PC-3 (cell line): ENCODE measurements at regions of chr12 and their contacts with region 1.

Region 1: GRCh38 chr12:110431957-110432587 is 18.1 kb downstream of the ARPC3 start:
- DNase-seq: no peak
- ATAC-seq: no peak
- H3K4me3 ChIP-seq: peak overlapping the region; percentile 78
- H3K27ac ChIP-seq: no peak overlapping the region
- H3K4me1 ChIP-seq: peaks cover 5% of the 10 kb centered on the region; the same call in 1 of the 2 replicates
- H3K27me3 ChIP-seq: no peaks in the 10 kb centered on the region
- CTCF ChIP-seq: no peak

Region 2: GRCh38 chr12:110024051-110024450 is 408.0 kb before region 1 on chr12:
- CTCF ChIA-PET with region 1: interaction called, 10 read pairs
- POLR2A ChIA-PET with region 1: no interaction called
- intact Hi-C with region 1: no loop called
- DNase-seq: no peak
- ATAC-seq: no peak
- H3K4me3 ChIP-seq: no peak overlapping the region
- H3K27ac ChIP-seq: no peak overlapping the region
- H3K4me1 ChIP-seq: peaks cover 21% of the 10 kb centered on the region
- H3K27me3 ChIP-seq: no peaks in the 10 kb centered on the region
- CTCF ChIP-seq: no peak

Region 3: DNA sequence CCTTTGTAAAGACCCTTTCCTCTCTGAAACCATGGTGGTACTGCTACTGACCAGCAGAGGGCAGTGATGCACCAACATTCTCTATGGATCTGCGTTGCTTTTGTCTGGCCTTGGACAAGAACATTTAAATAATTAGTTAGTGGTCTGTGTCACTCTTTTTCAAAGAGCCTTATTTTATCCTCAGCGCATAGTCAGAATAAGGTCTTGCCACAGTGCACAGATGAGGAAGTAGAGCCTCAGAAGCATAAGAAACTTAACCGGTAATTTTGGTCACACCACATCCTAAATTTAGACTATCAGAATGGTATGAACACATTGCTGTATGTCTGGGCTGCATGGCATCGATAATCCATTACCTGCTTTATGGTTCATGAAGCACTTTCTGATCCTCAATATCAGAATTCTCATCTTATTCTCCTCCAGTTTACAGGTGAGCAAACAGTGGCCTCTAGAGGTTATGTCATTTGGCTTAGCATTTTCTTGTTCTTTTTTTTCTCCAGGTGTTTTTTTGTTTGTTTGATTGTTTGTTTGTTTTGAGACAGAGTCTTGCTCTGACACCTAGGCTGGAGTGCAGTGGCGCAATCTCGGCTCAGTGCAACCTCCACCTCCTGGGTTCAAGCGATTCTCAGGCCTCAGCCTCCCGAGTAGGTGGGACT is 331.6 kb before region 1 on chr12:
- CTCF ChIA-PET with region 1: interaction called, 16 read pairs
- POLR2A ChIA-PET with region 1: interaction called, 4 read pairs
- intact Hi-C with region 1: loop called (anchors 1 kb)
- DNase-seq: peak; percentile 85
- ATAC-seq: peak; percentile 71
- H3K4me3 ChIP-seq: no peak overlapping the region
- H3K27ac ChIP-seq: no peak overlapping the region
- H3K4me1 ChIP-seq: peaks cover 4% of the 10 kb centered on the region; the same call in 1 of the 2 replicates
- H3K27me3 ChIP-seq: no peaks in the 10 kb centered on the region
- CTCF ChIP-seq: peak; percentile 99

Region 4: GRCh38 chr12:110124184-110124995 is 307.7 kb before region 1 on chr12 and contains the start of gene IFT81:
- CTCF ChIA-PET with region 1: interaction called, 15 read pairs
- POLR2A ChIA-PET with region 1: no interaction called
- intact Hi-C with region 1: no loop called
- DNase-seq: peak; percentile 97
- ATAC-seq: peak; percentile 91
- H3K4me3 ChIP-seq: peak within 1 kb of the TSS; percentile 86
- H3K27ac ChIP-seq: peak within 1 kb of the TSS; percentile 51
- H3K4me1 ChIP-seq: peaks cover 6% of the 10 kb centered on the region
- H3K27me3 ChIP-seq: no peaks in the 10 kb centered on the region
- CTCF ChIP-seq: no peak
- total RNA-seq, gene IFT81: 7.2 and 10.1 TPM in 2 replicates

Region 5: GRCh38 chr12:110280779-110281548 is 151.1 kb before region 1 on chr12 and contains the start of gene ATP2A2:
- CTCF ChIA-PET with region 1: interaction called, 3 read pairs
- POLR2A ChIA-PET with region 1: interaction called, 4 read pairs
- intact Hi-C with region 1: loop called (anchors 2 kb)
- DNase-seq: peak; percentile 96
- ATAC-seq: peak; percentile 73
- H3K4me3 ChIP-seq: peak within 1 kb of the TSS; percentile 85
- H3K27ac ChIP-seq: peak within 1 kb of the TSS; percentile 84
- H3K4me1 ChIP-seq: peaks cover 39% of the 10 kb centered on the region
- H3K27me3 ChIP-seq: no peaks in the 10 kb centered on the region
- CTCF ChIP-seq: no peak
- total RNA-seq, gene ATP2A2: 174 and 211 TPM in 2 replicates

Region 6: GRCh38 chr12:110355073-110355472 is 77.0 kb before region 1 on chr12:
- CTCF ChIA-PET with region 1: interaction called, 9 read pairs
- POLR2A ChIA-PET with region 1: no interaction called
- intact Hi-C with region 1: loop called (anchors 1 kb)
- DNase-seq: peak; percentile 47
- ATAC-seq: peak; percentile 51
- H3K4me3 ChIP-seq: no peak overlapping the region
- H3K27ac ChIP-seq: no peak overlapping the region
- H3K4me1 ChIP-seq: no peaks in the 10 kb centered on the region
- H3K27me3 ChIP-seq: no peaks in the 10 kb centered on the region
- CTCF ChIP-seq: peak; percentile 62

Region 7: DNA sequence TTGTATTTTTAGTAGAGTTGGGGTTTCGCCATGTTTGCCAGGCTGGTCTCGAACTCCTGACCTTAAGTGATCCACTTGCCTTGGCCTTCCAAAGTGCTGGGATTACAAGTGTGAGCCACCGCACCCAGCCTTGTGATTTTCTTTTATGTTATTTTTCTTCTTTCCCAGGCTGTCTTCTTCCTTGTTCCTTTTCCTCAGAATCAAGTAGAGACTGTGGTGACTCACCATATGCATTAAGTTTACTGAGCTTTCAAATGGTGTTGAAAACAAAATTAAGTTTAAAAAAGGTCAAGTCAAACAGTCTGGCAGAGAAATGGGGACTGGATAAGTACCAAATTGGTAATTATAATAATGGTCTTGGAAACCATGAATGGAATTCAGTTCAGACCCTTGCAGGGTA is 12.4 kb after region 1 on chr12:
- CTCF ChIA-PET with region 1: no interaction called
- POLR2A ChIA-PET with region 1: no interaction called
- intact Hi-C with region 1: no loop called
- DNase-seq: no peak
- ATAC-seq: no peak
- H3K4me3 ChIP-seq: no peak overlapping the region
- H3K27ac ChIP-seq: no peak overlapping the region
- H3K4me1 ChIP-seq: 0 out of 2 replicates have a peak, but pooled peaks cover 5% of the 10 kb centered on the region
- H3K27me3 ChIP-seq: no peaks in the 10 kb centered on the region
- CTCF ChIP-seq: no peak